ENCODE measurements at regions of chr20 and their contacts with region 1.

Region 1: DNA sequence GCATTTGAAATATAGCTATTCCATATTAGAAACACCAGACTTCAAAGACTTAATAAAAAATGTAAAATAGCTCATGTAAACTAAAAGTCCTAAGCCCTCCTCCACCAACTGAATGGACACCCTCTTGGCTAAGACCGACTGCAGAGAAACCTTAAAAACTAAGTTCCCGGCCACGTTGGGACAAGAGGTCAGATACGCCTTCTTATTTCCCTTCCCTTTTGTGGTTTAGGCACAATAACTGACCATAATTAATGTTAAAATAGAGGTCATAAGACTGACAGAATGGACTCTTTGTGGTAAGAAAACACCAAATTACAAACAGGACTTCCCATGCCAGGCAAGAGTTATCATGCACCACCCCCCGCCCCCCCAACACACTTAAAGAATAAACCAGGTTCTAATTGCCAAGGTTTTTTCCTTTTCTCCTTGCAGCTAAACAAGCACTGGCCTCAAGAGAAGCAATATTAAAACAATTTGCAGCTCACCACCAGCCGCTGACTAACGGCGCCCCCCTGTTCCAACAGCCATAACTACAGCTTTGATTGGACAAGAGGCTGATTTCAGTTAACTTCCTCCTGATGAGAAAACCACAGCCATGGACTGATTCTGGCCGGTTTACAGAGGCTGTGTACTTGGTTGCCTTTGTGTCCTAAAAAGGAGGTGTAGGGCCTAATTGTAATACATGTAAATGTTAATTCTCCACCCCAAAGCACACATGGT is 10.7 kb upstream of the LAMP5 start:
- DNase-seq: peak; percentile 44
- ATAC-seq: no peak; the same call in 1 of the 2 replicates
- H3K4me3 Mint-ChIP-seq: no peak overlapping the region
- H3K27ac Mint-ChIP-seq: no peak overlapping the region
- H3K4me1 Mint-ChIP-seq: peaks cover 26% of the 10 kb centered on the region
- H3K27me3 Mint-ChIP-seq: peaks cover 64% of the 10 kb centered on the region
- CTCF ChIP-seq: no peak

Region 2: DNA sequence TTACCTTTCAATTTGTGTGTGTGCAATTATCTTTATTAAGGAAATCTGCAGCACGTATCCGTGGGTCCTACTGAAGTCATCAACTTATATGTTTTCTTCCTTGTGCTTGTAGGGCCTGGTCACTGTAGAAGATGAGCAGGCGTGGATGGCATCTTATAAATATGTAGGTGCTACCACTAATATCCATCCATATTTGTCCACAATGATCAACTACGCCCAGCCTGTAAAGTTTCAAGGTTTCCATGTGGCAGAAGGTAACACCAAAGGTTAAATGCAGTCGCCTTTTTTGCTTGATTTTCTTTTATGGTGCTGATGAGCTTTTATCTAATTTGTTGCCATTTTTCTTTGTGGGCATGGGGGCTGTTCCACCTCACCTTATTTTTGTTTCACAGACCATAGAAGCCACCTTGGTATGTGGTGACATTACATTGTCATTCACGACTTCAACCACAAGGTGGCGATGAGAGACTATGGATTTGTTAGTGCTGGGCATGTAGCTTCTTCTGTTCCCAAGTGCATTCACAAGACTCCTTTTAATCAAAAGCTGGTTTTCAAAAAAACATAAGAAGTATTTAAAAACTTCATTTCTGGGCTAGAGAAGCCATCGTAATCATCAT is 95.8 kb before region 1 on chr20:
- CTCF ChIA-PET with region 1: interaction called, 12 read pairs
- POLR2A ChIA-PET with region 1: no interaction called
- DNase-seq: peak; percentile 73
- ATAC-seq: peak; percentile 91
- H3K4me3 Mint-ChIP-seq: no peak overlapping the region
- H3K27ac Mint-ChIP-seq: no peak overlapping the region
- H3K4me1 Mint-ChIP-seq: no peaks in the 10 kb centered on the region
- H3K27me3 Mint-ChIP-seq: no peaks in the 10 kb centered on the region
- CTCF ChIP-seq: peak; percentile 76

Region 3: DNA sequence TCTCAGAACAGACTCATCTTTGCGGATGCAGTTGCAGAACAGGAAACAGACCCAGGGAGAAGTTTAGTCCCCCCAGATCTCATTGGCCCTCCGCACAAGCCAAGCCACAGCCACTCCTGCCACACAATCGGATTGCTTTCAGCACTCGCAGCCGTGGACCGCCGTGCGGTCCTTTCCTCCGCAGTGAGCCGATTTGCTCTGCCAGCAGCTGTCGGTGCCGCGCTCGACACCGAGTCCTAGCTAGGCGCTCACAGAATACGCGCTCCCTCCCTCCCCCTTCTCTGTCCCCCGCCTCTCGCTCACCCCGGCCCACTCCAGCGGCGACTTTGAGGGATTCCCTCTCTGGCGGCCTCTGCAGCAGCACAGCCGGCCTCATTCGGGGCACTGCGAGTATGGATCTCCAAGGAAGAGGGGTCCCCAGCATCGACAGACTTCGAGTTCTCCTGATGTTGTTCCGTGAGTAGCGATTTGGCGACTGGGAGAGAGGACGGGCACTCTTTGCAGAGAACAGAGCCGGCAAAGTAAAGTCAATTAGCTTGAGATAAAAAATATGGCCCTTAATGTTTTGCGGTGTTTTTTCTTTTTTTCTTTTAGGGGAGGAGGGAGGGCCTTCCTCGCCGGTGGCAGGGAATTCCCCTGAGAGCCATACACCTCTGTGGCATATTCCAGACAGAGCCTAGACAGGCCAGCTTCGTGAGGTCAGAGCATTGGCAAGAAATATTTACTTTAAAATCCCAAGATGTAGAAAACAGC is 11.0 kb after region 1 on chr20 and contains the start of gene LAMP5:
- CTCF ChIA-PET with region 1: interaction called, 25 read pairs
- POLR2A ChIA-PET with region 1: no interaction called
- DNase-seq: peak; percentile 82
- ATAC-seq: peak; percentile 74
- H3K4me3 Mint-ChIP-seq: peak within 1 kb of the TSS; percentile 79
- H3K27ac Mint-ChIP-seq: no peak within 1 kb of the TSS
- H3K4me1 Mint-ChIP-seq: peaks cover 50% of the 10 kb centered on the region
- H3K27me3 Mint-ChIP-seq: peaks cover 100% of the 10 kb centered on the region
- CTCF ChIP-seq: no peak
- total RNA-seq, gene LAMP5: 0.11 to 0.37 TPM (median 0.31 TPM) in 3 replicates

Measured in WTC11 (cell line).